SK-N-SH (cell line): ENCODE measurements at regions of chr20 and their contacts with region 1.

Region 1: GRCh38 chr20:5205348-5206210 is 78.8 kb downstream of the CDS2 start:
- DNase-seq: peak; percentile 83
- H3K4me3 ChIP-seq: no peak overlapping the region; a peak in 1 of 4 replicates
- H3K27ac ChIP-seq: no peak overlapping the region; a peak in 1 of 4 replicates
- H3K4me1 ChIP-seq: peaks cover 0 to 5% of the 10 kb centered on the region in 2 experiments; a peak in 1 of 4 replicates
- H3K27me3 ChIP-seq: no peaks in the 10 kb centered on the region
- CTCF ChIP-seq: peak; percentile 96
- EP300 ChIP-seq: no peak
- RAD21 ChIP-seq: peak; percentile 98

Region 2: DNA sequence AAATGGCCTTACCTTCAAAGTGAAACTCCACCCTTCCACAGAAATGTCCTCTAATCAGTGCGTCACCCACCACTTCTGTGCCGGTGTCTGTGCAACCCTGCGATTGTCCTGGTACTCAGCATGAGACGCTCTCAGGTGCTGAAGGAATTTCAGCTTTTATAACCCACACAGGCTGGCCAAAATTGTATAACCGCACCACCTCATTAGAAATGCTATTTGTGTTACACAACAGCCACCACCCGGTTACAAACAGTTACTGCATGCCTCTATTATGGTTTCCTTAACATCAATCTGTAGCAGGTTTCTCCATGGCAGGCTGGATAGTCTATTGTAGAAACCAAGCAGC is 255.8 kb before region 1 on chr20:
- CTCF ChIA-PET with region 1: no interaction called
- POLR2A ChIA-PET with region 1: no interaction called
- DNase-seq: peak; percentile 46
- H3K4me3 ChIP-seq: no peak overlapping the region
- H3K27ac ChIP-seq: no peak overlapping the region
- H3K4me1 ChIP-seq: peaks cover 2 to 5% of the 10 kb centered on the region in 2 experiments; a peak in 1 of 4 replicates
- H3K27me3 ChIP-seq: no peaks in the 10 kb centered on the region
- CTCF ChIP-seq: peak; percentile 57
- EP300 ChIP-seq: no peak
- RAD21 ChIP-seq: peak; percentile 81

Region 3: GRCh38 chr20:5215672-5216304 is 10.2 kb after region 1 on chr20:
- CTCF ChIA-PET with region 1: interaction called, 56 read pairs
- POLR2A ChIA-PET with region 1: no interaction called
- DNase-seq: no peak
- H3K4me3 ChIP-seq: no peak overlapping the region
- H3K27ac ChIP-seq: peak overlapping the region; percentile 20 to 53; a peak in 2 of 4 replicates
- H3K4me1 ChIP-seq: peaks cover 4 to 6% of the 10 kb centered on the region in 2 experiments; a peak in 3 of 4 replicates
- H3K27me3 ChIP-seq: no peaks in the 10 kb centered on the region
- CTCF ChIP-seq: no peak
- EP300 ChIP-seq: no peak
- RAD21 ChIP-seq: no peak

Region 4: GRCh38 chr20:5309971-5310370 is 104.4 kb after region 1 on chr20:
- CTCF ChIA-PET with region 1: interaction called, 100 read pairs
- POLR2A ChIA-PET with region 1: no interaction called
- DNase-seq: no peak
- H3K4me3 ChIP-seq: no peak overlapping the region
- H3K27ac ChIP-seq: no peak overlapping the region
- H3K4me1 ChIP-seq: peaks cover 0 to 18% of the 10 kb centered on the region in 2 experiments; a peak in 1 of 4 replicates
- H3K27me3 ChIP-seq: no peaks in the 10 kb centered on the region
- CTCF ChIP-seq: no peak
- EP300 ChIP-seq: no peak
- RAD21 ChIP-seq: no peak

Region 5: DNA sequence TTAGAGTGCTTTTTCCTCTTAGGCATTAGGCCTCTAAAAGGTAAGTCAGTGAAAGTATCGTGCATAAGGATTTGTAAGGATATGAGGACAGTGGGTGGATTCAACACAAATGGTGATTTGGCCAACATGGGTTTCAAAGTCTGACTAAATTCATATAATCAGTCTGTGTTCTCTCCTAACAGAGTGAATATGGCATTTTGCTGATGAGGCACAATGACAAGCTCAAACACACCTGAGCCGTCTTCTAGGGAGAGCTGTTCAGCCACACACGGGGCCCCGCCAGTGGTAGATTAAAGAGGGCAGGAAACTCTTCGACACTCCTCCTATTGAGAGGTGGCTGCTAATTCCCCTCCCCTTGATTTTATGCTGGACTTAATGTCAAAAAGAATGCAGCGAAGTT is 170.6 kb after region 1 on chr20:
- CTCF ChIA-PET with region 1: interaction called, 11 read pairs
- POLR2A ChIA-PET with region 1: no interaction called
- DNase-seq: no peak
- H3K4me3 ChIP-seq: no peak overlapping the region
- H3K27ac ChIP-seq: no peak overlapping the region
- H3K4me1 ChIP-seq: peaks cover 0 to 7% of the 10 kb centered on the region in 2 experiments; a peak in 1 of 4 replicates
- H3K27me3 ChIP-seq: no peaks in the 10 kb centered on the region
- CTCF ChIP-seq: no peak
- EP300 ChIP-seq: no peak
- RAD21 ChIP-seq: no peak

Region 6: DNA sequence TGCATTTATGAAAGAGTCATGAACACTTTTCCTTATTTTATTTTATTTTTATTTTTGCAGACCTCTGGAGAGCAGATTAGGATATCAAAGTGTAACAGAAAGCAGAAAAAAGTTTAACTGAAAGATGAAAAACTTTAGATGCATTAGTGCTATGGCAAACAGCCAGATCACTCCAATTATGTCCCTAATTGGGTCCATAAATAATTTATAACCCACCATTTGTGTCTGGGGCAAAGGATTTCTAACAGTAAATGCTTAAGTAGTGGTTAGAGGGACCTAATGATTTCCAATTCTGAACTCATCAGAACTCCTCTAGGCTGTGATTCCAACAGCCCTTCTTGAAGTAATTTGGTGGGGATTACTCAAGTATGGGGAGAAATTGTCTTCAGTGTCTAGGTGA is 204.9 kb after region 1 on chr20:
- CTCF ChIA-PET with region 1: interaction called, 16 read pairs
- POLR2A ChIA-PET with region 1: no interaction called
- DNase-seq: peak; percentile 26
- H3K4me3 ChIP-seq: no peak overlapping the region
- H3K27ac ChIP-seq: peak overlapping the region in 1 of 2 experiments; percentile 98; a peak in 2 of 4 replicates
- H3K4me1 ChIP-seq: peaks cover 0 to 31% of the 10 kb centered on the region in 2 experiments; a peak in 2 of 4 replicates
- H3K27me3 ChIP-seq: no peaks in the 10 kb centered on the region
- CTCF ChIP-seq: no peak
- EP300 ChIP-seq: peak in 1 of 2 experiments; percentile 89; a peak in 2 of 4 replicates
- RAD21 ChIP-seq: no peak

Region 7: GRCh38 chr20:5448449-5449118 is 243.0 kb after region 1 on chr20:
- CTCF ChIA-PET with region 1: interaction called, 260 read pairs
- POLR2A ChIA-PET with region 1: interaction called, 8 read pairs
- DNase-seq: peak; percentile 81
- H3K4me3 ChIP-seq: peak overlapping the region in 1 of 2 experiments; percentile 21; a peak in 1 of 4 replicates
- H3K27ac ChIP-seq: peak overlapping the region in 1 of 2 experiments; percentile 86; a peak in 2 of 4 replicates
- H3K4me1 ChIP-seq: peaks cover 0 to 15% of the 10 kb centered on the region in 2 experiments; a peak in 2 of 4 replicates
- H3K27me3 ChIP-seq: no peaks in the 10 kb centered on the region
- CTCF ChIP-seq: peak; percentile 76
- EP300 ChIP-seq: no peak
- RAD21 ChIP-seq: peak; percentile 90